ENCODE measurements at regions of chr7 and their contacts with region 1.

Region 1: DNA sequence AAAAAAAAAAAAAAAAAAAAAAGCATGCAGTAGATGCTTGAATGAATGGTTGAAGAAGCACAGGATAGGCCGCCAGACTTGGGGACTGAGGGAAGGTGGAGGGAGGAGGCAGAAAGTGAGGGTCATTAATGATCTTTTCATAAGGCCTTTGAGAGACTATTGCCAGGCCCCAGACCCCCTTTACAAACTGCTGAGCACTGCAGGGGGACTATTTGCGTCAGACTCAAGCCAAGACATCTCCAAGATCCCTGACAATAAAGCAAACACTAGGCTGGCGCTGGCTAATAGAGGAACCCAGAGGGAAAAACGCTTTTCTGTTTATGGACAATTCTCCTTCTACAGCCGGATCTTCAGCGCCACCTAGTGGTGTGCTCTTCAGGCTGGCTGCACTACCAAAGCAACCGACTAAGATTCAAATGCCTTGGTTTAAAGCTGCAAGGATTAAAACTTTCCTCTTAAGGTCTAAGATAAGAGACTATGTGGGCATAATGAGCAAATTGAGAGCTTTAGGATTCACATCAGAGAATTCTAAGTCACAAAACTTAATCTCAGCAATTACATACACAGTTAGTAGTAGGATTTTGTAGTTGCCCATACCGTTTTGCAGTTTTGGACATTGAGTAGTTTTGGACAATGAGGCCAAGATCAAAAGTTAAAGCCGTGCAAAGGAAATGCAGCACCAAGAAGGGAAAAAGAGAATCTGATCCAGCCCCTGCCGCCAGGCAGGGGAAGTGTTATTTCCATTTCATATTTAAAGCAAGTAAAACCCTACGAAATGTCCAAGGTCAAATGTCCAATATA is 17.9 kb upstream of the AGK start:
- DNase-seq: peak; percentile 29
- ATAC-seq: peak; percentile 45
- H3K4me3 Mint-ChIP-seq: no peak overlapping the region
- H3K27ac Mint-ChIP-seq: no peak overlapping the region
- H3K4me1 Mint-ChIP-seq: no peaks in the 10 kb centered on the region
- H3K27me3 Mint-ChIP-seq: peaks cover 23% of the 10 kb centered on the region
- CTCF ChIP-seq: peak; percentile 54

Region 2: GRCh38 chr7:140726281-140726680 is 807.1 kb before region 1 on chr7:
- CTCF ChIA-PET with region 1: interaction called, 3 read pairs
- POLR2A ChIA-PET with region 1: no interaction called
- intact Hi-C with region 1: loop called (anchors 1 kb)
- DNase-seq: no peak
- ATAC-seq: no peak
- H3K4me3 Mint-ChIP-seq: no peak overlapping the region
- H3K27ac Mint-ChIP-seq: peak overlapping the region; percentile 12
- H3K4me1 Mint-ChIP-seq: no peaks in the 10 kb centered on the region
- H3K27me3 Mint-ChIP-seq: no peaks in the 10 kb centered on the region
- CTCF ChIP-seq: no peak

Region 3: DNA sequence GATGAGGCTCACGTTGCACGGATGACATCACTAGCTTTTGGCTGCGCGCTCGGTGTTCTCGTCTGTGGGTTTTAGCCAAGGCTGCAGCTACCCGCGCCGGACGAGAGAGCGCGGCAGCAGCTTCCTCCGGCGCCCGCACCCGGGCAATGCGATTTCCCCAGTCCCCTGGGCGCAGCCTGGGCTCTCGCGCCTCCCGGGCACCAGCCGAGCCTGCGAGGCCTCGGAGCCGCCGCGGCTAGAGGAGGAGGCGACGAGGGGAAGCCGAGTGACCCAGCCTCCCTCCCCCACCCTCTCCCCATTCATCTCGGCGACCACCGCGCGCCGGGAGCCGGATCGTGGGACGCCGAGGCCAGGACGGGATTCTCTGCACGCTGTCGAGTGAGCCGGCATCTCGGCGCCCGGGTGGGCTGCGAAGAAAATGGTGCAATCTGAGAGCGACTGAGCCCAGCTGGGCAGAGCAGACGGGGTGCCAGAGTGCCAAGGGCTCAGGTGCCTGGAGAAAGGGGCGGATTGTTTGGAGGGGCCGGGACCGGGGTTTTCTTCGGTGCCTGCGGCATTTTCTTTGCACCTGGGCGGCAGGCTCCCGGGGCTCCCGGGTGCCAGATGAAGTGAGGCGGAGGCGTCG is 460.7 kb before region 1 on chr7:
- CTCF ChIA-PET with region 1: no interaction called
- POLR2A ChIA-PET with region 1: no interaction called
- intact Hi-C with region 1: loop called (anchors 2 kb)
- DNase-seq: no peak
- ATAC-seq: no peak
- H3K4me3 Mint-ChIP-seq: peak overlapping the region; percentile 67
- H3K27ac Mint-ChIP-seq: no peak overlapping the region
- H3K4me1 Mint-ChIP-seq: peaks cover 26% of the 10 kb centered on the region
- H3K27me3 Mint-ChIP-seq: peaks cover 48% of the 10 kb centered on the region
- CTCF ChIP-seq: no peak

Region 4: GRCh38 chr7:141441837-141442627 is 91.3 kb before region 1 on chr7:
- CTCF ChIA-PET with region 1: no interaction called
- POLR2A ChIA-PET with region 1: no interaction called
- intact Hi-C with region 1: no loop called
- DNase-seq: no peak
- ATAC-seq: no peak
- H3K4me3 Mint-ChIP-seq: no peak overlapping the region
- H3K27ac Mint-ChIP-seq: no peak overlapping the region
- H3K4me1 Mint-ChIP-seq: no peaks in the 10 kb centered on the region
- H3K27me3 Mint-ChIP-seq: no peaks in the 10 kb centered on the region
- CTCF ChIP-seq: no peak

Region 5: GRCh38 chr7:141475679-141476078 is 57.7 kb before region 1 on chr7:
- CTCF ChIA-PET with region 1: no interaction called
- POLR2A ChIA-PET with region 1: no interaction called
- intact Hi-C with region 1: no loop called
- DNase-seq: no peak
- ATAC-seq: no peak
- H3K4me3 Mint-ChIP-seq: no peak overlapping the region
- H3K27ac Mint-ChIP-seq: no peak overlapping the region
- H3K4me1 Mint-ChIP-seq: no peaks in the 10 kb centered on the region
- H3K27me3 Mint-ChIP-seq: peaks cover 5% of the 10 kb centered on the region
- CTCF ChIP-seq: no peak